AG04449 (cell line): ENCODE measurements at regions of chrX and their contacts with region 1.

Region 1: GRCh38 chrX:103629318-103630170 is 769 bp downstream of the TCEAL1 start:
- DNase-seq: no peak
- H3K4me3 ChIP-seq: peak overlapping the region; percentile 68
- CTCF ChIP-seq: peak; percentile 76

Region 2: DNA sequence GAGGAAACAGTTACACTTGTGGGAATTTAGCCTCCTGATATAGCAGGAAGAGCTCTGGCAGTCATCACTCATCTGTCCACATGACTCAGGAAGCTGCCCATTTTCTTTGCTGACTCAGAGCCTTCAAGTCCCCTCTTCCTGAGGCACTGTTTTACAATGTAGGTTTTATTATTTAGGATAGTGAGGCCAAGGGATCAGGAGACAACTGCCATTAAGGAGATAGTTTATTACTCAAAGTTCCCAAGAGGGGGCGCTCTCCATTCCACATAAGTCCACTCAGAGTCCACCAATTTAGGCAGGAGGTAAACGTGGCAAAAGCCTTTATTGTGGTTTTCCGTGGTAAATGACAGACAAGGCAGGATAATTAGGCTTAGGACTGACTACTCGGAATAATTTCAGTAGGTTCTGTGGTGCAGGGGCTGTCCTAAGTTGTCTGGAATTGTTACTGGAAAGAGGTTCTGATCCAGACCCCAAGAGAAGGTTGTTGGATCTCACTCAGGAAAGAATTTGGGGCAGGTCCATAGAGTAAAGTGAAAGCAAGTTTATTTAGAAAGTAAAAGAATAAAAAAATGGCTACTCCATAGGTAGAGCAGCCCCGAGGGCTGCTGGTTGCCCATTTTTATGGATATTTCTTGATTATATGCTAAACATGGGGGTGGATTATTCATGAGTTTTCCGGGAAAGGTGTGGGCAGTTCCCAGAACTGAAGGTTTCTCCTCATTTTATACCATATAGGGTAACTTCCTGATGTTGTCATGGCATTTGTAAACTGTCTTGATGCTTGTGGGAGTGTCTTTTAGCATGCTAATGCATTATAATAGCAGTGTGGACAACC is 788.5 kb before region 1 on chrX:
- CTCF ChIA-PET with region 1: no interaction called
- POLR2A ChIA-PET with region 1: no interaction called
- DNase-seq: no peak
- H3K4me3 ChIP-seq: no peak overlapping the region
- CTCF ChIP-seq: no peak

Region 3: DNA sequence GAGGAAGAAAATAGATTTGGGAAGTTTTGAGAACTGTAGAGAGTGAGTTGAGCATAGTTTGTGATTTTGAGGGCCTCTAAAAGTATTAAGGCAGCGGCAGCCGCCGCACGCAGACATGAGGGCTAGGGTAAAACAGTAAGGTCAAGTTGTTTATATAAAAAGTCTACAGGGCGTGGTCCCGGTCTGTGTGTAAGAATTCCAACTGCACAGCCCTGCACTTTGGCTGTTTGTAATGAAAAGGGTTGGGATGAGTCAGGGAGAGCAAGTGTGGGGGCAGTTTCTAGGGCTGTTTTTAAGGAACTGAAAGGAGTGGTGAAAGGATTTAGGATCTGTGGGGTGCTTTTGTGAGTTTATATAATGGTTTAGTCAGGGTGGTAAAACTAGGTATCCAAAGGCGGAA is 198.2 kb before region 1 on chrX:
- CTCF ChIA-PET with region 1: no interaction called
- POLR2A ChIA-PET with region 1: no interaction called
- DNase-seq: no peak
- H3K4me3 ChIP-seq: no peak overlapping the region
- CTCF ChIP-seq: no peak

Region 4: GRCh38 chrX:103533511-103534216 is 95.9 kb before region 1 on chrX:
- CTCF ChIA-PET with region 1: interaction called, 14 read pairs
- POLR2A ChIA-PET with region 1: no interaction called
- DNase-seq: no peak
- H3K4me3 ChIP-seq: peak overlapping the region; percentile 26
- CTCF ChIP-seq: peak; percentile 58

Region 5: GRCh38 chrX:103614992-103615391 is 14.6 kb before region 1 on chrX:
- CTCF ChIA-PET with region 1: interaction called, 23 read pairs
- POLR2A ChIA-PET with region 1: interaction called, 4 read pairs
- DNase-seq: no peak
- H3K4me3 ChIP-seq: no peak overlapping the region
- CTCF ChIP-seq: no peak

Region 6: DNA sequence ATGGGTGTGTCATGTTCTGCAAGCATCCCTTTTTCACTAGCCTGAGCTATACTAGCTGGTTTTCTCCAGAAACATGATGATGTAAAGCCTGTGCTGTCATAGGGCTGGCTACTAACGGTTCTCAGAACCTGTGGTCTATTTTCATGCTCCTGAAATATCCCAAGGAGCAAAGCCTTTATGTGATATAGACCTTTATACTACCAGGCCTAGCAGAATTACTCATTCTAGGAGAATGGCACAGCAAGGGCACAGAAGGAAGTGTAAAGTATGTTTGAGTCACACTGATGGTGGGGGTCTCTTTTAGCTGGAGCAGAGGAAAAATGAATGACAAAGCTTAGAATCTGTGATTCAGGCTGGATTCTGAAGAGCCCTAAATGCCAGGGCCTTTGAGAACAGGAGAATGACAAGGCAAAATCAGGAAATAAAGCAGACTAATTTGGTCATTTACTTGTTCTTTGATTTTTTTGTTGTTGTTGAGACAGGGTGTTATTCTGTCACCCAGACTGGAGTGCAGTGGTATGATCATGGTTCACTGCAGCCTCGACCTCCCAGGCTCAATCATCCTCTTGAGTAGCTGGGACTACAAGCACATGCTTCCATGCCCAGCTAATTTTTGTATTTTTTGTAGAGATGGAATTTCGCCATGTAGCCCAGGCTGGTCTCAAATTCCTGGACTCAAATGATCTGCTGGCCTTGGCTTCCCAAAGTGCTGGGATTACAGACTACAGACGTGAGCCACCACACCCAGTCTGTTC is 11.0 kb after region 1 on chrX:
- CTCF ChIA-PET with region 1: interaction called, 16 read pairs
- POLR2A ChIA-PET with region 1: interaction called, 5 read pairs
- DNase-seq: no peak
- H3K4me3 ChIP-seq: no peak overlapping the region
- CTCF ChIP-seq: no peak